Activated T-helper 1 cell treated with anti-CD3 and anti-CD28 coated beads, Interleukin-12 subunit alpha, Interleukin-12 subunit beta, Interleukin-2, Interleukin-4 antibody, amounts not matched to agents 30 ng/mL and 10 ng/mL and 1 ng/mL, durations not matched to agents 14 hours and 24 hours and 36 hours (primary cell): ENCODE measurements at regions of chr1 and their contacts with region 1.

Region 1: GRCh38 chr1:174519844-174520243 is 72.1 kb downstream of the GPR52 start:
- DNase-seq: no peak
- H3K4me3 Mint-ChIP-seq: no peak overlapping the region
- H3K27ac Mint-ChIP-seq: no peak overlapping the region
- H3K4me1 Mint-ChIP-seq: no peaks in the 10 kb centered on the region
- H3K27me3 Mint-ChIP-seq: no peaks in the 10 kb centered on the region

Region 2: DNA sequence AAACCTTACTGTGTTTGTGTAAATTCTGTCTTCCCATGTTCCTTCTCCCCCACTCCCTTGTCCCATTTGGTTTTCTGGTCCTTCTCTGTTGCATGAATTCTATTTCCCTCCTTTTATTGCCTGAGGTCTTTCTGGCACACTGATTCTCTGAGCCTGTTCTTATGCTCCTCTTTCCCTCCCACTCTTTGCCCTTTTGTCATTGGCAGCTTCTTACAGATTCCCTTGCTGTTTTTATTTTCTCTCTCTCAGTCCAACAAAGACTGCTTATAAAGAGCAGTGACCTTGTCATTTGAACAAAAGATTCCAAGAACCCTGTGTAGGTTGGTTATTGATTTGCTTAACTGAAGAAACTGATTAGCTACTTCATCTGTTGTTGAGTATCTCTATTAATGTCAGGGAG is 22.4 kb before region 1 on chr1:
- intact Hi-C with region 1: no loop called
- DNase-seq: no peak
- H3K4me3 Mint-ChIP-seq: no peak overlapping the region
- H3K27ac Mint-ChIP-seq: no peak overlapping the region
- H3K4me1 Mint-ChIP-seq: no peaks in the 10 kb centered on the region
- H3K27me3 Mint-ChIP-seq: no peaks in the 10 kb centered on the region

Region 3: GRCh38 chr1:174976436-174977108 is 456.7 kb after region 1 on chr1:
- intact Hi-C with region 1: loop called (anchors 5 kb)
- DNase-seq: no peak
- H3K4me3 Mint-ChIP-seq: no peak overlapping the region
- H3K27ac Mint-ChIP-seq: no peak overlapping the region
- H3K4me1 Mint-ChIP-seq: peaks cover 51% of the 10 kb centered on the region
- H3K27me3 Mint-ChIP-seq: no peaks in the 10 kb centered on the region